ENCODE measurements at regions of chr15 and their contacts with region 1.

Region 1: GRCh38 chr15:89023311-89023961 is 64.8 kb upstream of the ABHD2 start:
- DNase-seq: peak; percentile 26
- H3K4me3 Mint-ChIP-seq: no peak overlapping the region
- H3K27ac Mint-ChIP-seq: no peak overlapping the region
- H3K4me1 Mint-ChIP-seq: no peaks in the 10 kb centered on the region
- H3K27me3 Mint-ChIP-seq: no peaks in the 10 kb centered on the region
- CTCF ChIP-seq: no peak

Region 2: GRCh38 chr15:88913017-88913849 is 110.2 kb before region 1 on chr15 and contains the start of gene MFGE8:
- CTCF ChIA-PET with region 1: interaction called, 128 read pairs
- POLR2A ChIA-PET with region 1: interaction called, 10 read pairs
- intact Hi-C with region 1: no loop called
- DNase-seq: peak; percentile 80
- H3K4me3 Mint-ChIP-seq: peak within 1 kb of the TSS; percentile 95
- H3K27ac Mint-ChIP-seq: peak within 1 kb of the TSS; percentile 89
- H3K4me1 Mint-ChIP-seq: peaks cover 33% of the 10 kb centered on the region
- H3K27me3 Mint-ChIP-seq: no peaks in the 10 kb centered on the region
- CTCF ChIP-seq: no peak
- total RNA-seq, gene MFGE8: 207 and 254 TPM in 2 replicates

Measured in MCF 10A (cell line).